ENCODE measurements at regions of chr9 and their contacts with region 1.

Region 1: GRCh38 chr9:69683927-69684326 is 11.8 kb upstream of the APBA1 start:
- DNase-seq: no peak
- H3K4me3 ChIP-seq: no peak overlapping the region
- H3K27ac ChIP-seq: no peak overlapping the region
- H3K4me1 ChIP-seq: no peaks in the 10 kb centered on the region
- H3K27me3 ChIP-seq: no peaks in the 10 kb centered on the region
- CTCF ChIP-seq: no peak
- POLR2A ChIP-seq: no peak

Region 2: GRCh38 chr9:69719983-69720382 is 36.1 kb after region 1 on chr9:
- intact Hi-C with region 1: loop called in 1 of 2 experiments (anchors 5 kb)
- DNase-seq: no peak
- H3K4me3 ChIP-seq: no peak overlapping the region
- H3K27ac ChIP-seq: no peak overlapping the region
- H3K4me1 ChIP-seq: no peaks in the 10 kb centered on the region
- H3K27me3 ChIP-seq: no peaks in the 10 kb centered on the region
- CTCF ChIP-seq: no peak
- POLR2A ChIP-seq: no peak